ENCODE measurements at regions of chr9 and their contacts with region 1.

Region 1: DNA sequence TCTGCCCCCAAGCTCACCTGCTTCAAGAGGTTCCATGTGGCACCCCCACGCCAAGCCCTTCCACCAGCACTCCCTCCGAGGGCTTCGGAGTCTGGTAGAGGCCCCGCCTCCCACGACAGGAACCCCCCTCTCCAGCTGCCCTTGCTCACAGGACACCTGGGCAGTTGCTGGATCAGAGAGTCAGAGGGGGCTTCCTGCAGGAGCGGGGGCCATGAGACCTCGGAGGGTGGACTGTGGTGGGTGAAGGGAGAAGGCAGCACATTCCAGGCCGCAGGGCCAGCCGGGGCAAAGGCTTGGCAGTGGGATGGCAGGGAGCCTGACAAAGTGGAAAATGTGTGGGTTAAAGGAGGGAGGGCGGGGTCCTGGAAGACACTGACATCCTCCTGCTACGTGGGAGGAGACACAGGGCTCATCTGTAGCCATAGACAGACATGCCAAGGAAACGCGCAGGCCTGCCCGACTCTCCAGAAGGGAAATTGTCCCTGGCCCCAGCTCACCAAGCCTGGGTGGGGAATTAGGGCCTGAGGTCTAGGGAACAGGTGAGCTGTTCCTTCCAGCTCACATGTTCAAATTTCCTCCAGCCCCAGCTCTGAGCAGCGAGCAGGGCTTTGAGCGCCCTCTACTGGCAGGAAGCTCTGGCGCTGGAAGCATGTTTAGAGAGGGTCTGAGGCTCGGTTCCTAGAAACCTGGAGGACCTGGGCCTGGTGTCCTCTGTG is 74.2 kb downstream of the NTNG2 start:
- DNase-seq: peak; percentile 87
- ATAC-seq: peak; percentile 35

Region 2: DNA sequence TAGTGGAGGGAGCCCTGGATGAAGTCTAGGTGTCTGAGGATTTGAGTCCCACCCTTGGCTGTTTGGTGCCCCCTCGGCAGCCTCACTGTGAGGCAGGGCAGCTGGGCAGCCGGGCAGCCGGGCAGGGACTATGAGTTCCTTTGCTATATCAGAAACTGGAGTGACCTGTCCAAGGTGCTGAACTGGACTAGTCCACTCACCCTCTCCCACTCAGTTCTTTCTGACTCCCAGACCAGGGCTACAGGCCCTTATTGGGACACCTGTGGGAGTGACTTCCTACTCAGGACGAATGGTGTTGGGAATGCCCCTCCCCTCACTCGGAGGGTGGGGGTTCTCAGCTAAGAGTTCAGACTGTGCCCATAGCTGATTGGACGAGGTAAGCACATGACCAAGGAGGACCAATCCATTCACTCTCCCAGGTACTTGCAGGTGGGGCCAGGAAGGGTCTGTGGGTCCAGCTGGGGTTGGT is 462.2 kb before region 1 on chr9:
- intact Hi-C with region 1: no loop called
- DNase-seq: peak; percentile 35
- ATAC-seq: peak; percentile 76

Region 3: DNA sequence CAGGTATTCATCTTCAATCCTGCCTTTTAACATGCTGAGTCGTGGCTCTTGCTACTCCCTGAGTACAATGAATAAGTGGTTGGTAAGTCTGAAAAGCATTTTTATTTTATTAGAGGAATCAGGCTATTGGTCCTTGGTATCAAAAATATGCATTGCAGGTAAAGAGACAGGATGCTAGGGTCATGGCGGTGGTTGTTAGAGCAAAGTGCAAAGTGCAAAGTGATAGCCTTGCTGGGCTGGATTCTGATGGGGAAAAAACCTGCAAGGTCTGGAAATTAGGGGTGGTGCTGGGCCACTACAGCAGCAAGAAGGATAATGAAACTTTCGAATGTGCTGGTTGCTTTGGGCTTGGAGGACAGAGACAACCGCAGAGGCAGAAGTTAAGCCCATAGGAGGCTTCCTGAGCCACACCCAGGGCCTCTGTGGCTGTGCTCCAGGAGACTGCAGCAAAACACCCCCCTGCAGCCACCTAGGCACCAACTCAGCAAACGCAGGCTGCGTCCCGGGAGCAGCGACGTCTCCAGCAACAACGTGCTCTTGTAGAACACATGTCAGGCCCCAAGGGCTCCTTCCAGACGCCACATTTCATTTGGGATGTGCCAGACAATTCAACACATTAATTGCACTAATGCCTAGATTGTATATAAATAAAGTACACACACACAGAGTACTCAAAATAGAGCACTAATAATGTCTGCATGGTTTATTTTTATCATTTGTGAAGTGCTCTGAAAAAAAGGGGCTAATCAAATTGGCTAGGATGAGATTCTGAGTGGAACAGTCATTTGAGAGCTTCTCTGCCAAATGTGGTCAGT is 346.5 kb before region 1 on chr9:
- intact Hi-C with region 1: no loop called
- DNase-seq: peak; percentile 65
- ATAC-seq: peak; percentile 85

Region 4: GRCh38 chr9:132169672-132170392 is 66.3 kb before region 1 on chr9:
- intact Hi-C with region 1: loop called (anchors 10 kb)
- DNase-seq: peak; percentile 74
- ATAC-seq: peak; percentile 72

Region 5: GRCh38 chr9:132218208-132218607 is 17.9 kb before region 1 on chr9:
- intact Hi-C with region 1: no loop called
- DNase-seq: no peak
- ATAC-seq: no peak

Region 6: DNA sequence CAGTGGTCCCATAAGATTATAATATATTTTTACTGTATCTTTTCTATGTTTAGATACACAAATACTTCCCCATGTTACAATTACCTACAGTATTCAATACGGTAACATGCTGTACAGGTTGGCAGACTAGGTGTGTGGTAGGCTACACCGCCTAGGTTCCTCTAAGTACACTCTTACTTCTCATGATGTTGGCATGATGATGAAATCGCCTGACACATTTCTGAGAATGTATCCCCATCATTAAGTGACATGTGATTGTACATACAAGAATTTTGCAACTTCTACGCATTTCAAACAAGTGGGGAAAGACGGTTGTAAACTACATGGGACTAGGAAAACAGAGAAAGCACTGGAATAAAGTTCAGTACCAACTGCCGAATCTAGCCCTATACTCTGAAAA is 65.4 kb after region 1 on chr9:
- intact Hi-C with region 1: no loop called
- DNase-seq: no peak
- ATAC-seq: no peak

Measured in left ventricle myocardium superior (tissue), 1 donor.